Mammary epithelial cell (primary cell): ENCODE measurements at regions of chr3 and their contacts with region 1.

Region 1: GRCh38 chr3:169662132-169662842 is 1.2 kb downstream of the MECOM start:
- DNase-seq: peak; percentile 73
- H3K4me3 ChIP-seq: peak overlapping the region; percentile 42 to 61 (median 51)
- H3K27ac ChIP-seq: no peak overlapping the region
- H3K4me1 ChIP-seq: peaks cover 14% of the 10 kb centered on the region
- H3K27me3 ChIP-seq: peaks cover 68% of the 10 kb centered on the region
- CTCF ChIP-seq: peak; percentile 10 to 51

Region 2: DNA sequence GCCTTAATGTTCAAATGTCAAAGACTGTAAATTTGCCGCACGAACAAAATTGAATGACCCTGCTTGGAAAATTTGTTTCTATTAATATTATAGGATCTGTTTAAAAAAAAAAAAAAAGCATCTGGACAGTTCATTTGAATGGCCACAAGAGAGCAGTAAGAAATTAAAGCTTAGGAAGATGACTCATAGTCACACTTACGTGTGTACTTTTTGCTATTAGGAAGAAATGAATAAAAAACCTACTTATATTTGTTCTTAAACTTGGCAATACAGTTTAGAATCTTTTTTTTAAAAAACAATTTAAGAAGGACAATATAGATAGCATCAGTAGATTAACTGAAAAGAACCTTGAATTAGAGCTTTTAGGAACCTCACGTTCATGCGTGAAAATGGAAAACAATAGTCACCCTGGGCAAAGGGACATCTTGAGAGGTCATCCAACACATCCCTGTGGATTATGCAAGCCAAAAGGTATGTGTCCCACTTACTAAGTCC is 620.6 kb before region 1 on chr3:
- CTCF ChIA-PET with region 1: no interaction called
- dilution Hi-C with region 1: no loop called
- in situ Hi-C with region 1: no loop called
- intact Hi-C with region 1: loop called (anchors 1 kb)
- DNase-seq: peak; percentile 43
- H3K4me3 ChIP-seq: no peak overlapping the region
- H3K27ac ChIP-seq: peak overlapping the region; percentile 37
- H3K4me1 ChIP-seq: peaks cover 33% of the 10 kb centered on the region
- H3K27me3 ChIP-seq: no peaks in the 10 kb centered on the region
- CTCF ChIP-seq: peak; percentile 63 to 68

Region 3: DNA sequence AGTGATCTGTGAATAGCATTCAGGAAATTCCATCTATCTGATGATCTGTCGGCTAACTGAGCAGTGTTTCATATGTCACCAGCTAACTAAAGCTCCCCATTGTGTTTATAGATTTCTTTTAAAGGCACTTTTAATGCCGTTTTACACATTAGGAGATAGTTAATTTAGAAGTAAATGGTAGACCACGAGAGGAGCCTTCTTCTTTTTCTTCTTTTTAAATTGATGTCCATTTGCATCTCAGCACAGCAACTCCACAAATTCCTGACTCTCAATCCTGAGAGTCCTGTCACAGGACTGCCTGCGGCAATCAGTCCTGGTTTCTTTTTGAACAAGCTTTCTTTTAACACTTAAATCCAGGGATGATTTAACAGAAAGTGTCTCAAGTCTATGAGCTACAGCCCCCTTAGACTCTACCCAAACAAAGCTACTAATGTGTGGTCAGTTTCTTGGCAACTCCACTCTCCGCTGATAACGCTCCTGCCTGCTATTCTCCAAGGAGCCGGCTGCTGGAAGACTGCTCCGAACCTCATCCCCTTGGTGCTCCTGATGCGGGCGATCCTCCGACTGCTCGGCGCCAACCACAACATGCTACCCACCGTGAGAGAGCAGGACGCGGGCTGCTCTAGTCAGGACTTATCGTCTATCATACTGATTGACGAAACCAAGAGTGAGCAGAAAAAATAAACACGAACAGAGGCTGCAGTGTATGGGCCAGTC is 420.1 kb before region 1 on chr3:
- CTCF ChIA-PET with region 1: no interaction called
- dilution Hi-C with region 1: no loop called
- in situ Hi-C with region 1: no loop called
- intact Hi-C with region 1: loop called (anchors 5 kb)
- DNase-seq: peak; percentile 30
- H3K4me3 ChIP-seq: peak overlapping the region; percentile 2 to 39 (median 34)
- H3K27ac ChIP-seq: no peak overlapping the region
- H3K4me1 ChIP-seq: peaks cover 8% of the 10 kb centered on the region
- H3K27me3 ChIP-seq: no peaks in the 10 kb centered on the region
- CTCF ChIP-seq: no peak

Region 4: GRCh38 chr3:169348929-169349613 is 313.2 kb before region 1 on chr3:
- CTCF ChIA-PET with region 1: no interaction called
- dilution Hi-C with region 1: no loop called
- in situ Hi-C with region 1: no loop called
- intact Hi-C with region 1: loop called (anchors 5 kb)
- DNase-seq: peak; percentile 92
- H3K4me3 ChIP-seq: no peak overlapping the region
- H3K27ac ChIP-seq: peak overlapping the region; percentile 85
- H3K4me1 ChIP-seq: peaks cover 36% of the 10 kb centered on the region
- H3K27me3 ChIP-seq: no peaks in the 10 kb centered on the region
- CTCF ChIP-seq: no peak

Region 5: DNA sequence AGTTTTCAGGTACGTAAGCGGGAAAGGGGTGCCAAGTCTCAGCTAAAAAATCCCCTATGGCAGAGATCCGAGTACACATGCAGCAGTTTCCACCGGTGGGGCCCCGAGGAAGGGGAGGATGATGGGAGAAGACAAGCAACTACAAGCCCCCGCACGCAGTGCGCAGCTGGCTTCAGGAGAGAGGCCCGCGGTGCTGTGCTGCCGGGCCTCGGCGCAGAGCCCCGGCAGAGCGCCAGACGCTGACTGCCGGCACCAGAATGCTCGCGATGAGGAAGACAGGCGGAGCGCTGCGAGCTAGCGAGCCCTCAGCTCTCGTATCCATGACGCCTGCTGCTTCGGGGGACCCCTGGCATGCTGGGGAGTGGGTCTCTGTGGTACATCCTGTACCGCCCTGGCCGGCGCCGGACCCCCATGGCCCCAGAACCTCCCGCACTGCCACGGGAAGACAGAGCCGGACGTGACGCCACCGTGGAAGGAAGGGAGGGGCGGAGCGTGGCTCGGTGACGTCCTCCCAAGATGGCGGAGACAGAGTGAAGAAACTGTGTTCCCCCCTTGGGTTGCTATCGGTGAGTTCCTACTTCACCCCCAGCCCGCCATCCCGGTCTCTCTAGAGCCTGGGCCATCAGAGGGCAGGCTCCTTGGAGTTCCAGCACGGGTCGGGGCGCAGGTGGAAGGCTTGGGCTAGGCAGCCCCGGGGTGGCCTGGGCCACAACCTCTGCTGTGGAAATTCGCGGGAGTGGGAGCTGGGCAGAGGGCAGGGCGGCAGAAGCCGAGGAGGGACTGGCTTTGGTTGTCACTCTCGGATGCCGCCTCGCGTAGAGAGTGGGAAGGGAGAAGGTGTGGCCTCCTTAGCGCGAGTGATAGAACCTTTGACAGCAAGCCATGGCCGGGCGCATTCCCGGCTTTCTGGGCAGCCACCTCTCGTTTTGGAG is 110.9 kb after region 1 on chr3 and contains the start of gene MYNN:
- CTCF ChIA-PET with region 1: no interaction called
- dilution Hi-C with region 1: no loop called
- in situ Hi-C with region 1: no loop called
- intact Hi-C with region 1: loop called (anchors 2 kb)
- DNase-seq: peak; percentile 89
- H3K4me3 ChIP-seq: peak within 1 kb of the TSS; percentile 86 to 95 (median 94)
- H3K27ac ChIP-seq: peak within 1 kb of the TSS; percentile 93
- H3K4me1 ChIP-seq: peaks cover 17% of the 10 kb centered on the region
- H3K27me3 ChIP-seq: no peaks in the 10 kb centered on the region
- CTCF ChIP-seq: peak in 1 of 2 donors; percentile 28
- total RNA-seq, gene MYNN: 13.0 to 18.3 TPM